ENCODE measurements at regions of chr4 and their contacts with region 1.

Region 1: DNA sequence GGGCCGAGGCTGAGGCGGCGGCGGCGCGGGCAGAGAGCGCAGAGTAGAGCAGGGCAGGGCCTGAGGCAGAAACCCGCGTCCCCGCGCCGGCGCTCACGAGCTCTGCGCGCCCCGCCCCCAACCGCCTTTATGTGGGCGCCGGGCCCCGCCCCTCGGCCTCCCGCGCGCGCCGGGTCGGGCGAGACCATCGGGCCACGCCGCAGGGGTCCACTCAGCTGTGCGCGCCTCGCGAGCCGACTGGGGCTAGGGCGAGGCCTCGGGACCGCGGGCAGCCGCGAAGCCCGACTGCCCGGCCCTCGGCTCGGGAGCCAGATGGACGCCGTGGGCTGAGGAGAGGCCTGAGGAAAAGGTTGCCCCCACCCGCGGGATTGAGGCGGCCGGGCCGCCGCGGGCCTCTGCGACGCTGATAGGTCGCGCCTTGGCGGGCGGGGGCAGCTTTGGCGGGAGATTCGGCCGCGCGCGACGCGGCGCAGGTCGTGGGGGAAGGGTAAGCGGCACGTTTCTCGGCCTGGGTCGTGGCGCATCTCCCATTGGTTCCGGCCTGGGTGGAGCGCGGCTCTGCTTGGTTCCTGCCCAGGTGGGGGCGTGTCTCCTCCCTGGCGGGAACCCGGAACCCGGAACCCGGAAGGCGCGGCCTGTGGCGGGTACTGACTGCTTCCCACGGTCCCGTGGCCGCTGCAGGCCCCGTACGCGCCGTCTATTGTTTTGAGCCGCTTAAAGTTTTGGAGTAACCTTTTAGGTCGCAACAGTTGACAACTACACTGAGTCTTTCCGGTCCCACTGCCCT is at the start of gene SLBP:
- DNase-seq: peak; percentile 100
- H3K4me3 Mint-ChIP-seq: peak within 1 kb of the TSS; percentile 95
- H3K27ac Mint-ChIP-seq: peak within 1 kb of the TSS; percentile 98
- H3K4me1 Mint-ChIP-seq: peaks cover 49% of the 10 kb centered on the region
- H3K27me3 Mint-ChIP-seq: no peaks in the 10 kb centered on the region
- total RNA-seq, gene SLBP: 150 and 156 TPM in 2 replicates

Region 2: GRCh38 chr4:1683736-1684505 is 28.5 kb before region 1 on chr4 and contains the start of gene FAM53A:
- intact Hi-C with region 1: loop called (anchors 1 kb)
- DNase-seq: no peak
- H3K4me3 Mint-ChIP-seq: peak within 1 kb of the TSS; percentile 83
- H3K27ac Mint-ChIP-seq: peak within 1 kb of the TSS; percentile 88
- H3K4me1 Mint-ChIP-seq: peaks cover 12% of the 10 kb centered on the region
- H3K27me3 Mint-ChIP-seq: peaks cover 2% of the 10 kb centered on the region
- total RNA-seq, gene FAM53A: 3.5 and 4.0 TPM in 2 replicates

Region 3: DNA sequence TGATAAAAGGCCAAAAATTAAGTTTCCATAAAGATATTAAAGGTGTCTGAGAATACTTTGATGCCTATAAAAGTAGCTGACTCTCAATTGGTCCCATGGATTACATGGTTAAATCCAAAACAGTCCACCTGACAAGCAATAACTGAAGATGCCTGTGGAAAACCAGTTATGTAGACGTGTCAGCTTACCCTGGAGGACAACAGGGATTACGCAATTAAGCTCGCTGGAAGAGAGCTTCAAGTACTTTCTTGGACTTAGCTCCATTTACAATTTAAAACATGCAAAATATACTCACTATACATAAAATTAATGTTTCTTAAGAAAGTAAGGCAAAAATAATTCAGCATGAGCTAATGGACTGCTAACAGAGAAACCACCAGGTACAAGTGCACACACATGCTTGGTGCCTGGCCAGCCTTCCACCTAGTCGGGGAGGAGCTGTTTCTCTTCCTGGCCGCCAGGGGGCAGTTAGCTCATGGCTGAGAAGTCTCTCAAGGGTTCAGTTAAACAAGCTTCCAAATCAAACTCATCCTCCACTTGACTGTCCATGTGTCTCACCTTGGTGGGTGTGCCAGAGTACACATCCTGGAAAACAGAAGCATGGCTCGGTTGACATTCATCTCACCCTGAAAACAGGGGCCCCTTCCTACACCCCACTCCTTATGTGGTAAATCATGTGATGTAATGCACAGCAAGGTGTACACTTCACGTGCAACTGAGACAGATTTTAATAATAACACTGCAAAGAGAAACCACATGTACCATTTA is 19.1 kb before region 1 on chr4:
- intact Hi-C with region 1: loop called (anchors 1 kb)
- DNase-seq: peak; percentile 93
- H3K4me3 Mint-ChIP-seq: no peak overlapping the region
- H3K27ac Mint-ChIP-seq: peak overlapping the region; percentile 39
- H3K4me1 Mint-ChIP-seq: peaks cover 7% of the 10 kb centered on the region
- H3K27me3 Mint-ChIP-seq: no peaks in the 10 kb centered on the region

Region 4: GRCh38 chr4:2105559-2105958 is 393.1 kb after region 1 on chr4:
- intact Hi-C with region 1: no loop called
- DNase-seq: peak; percentile 27
- H3K4me3 Mint-ChIP-seq: no peak overlapping the region
- H3K27ac Mint-ChIP-seq: no peak overlapping the region
- H3K4me1 Mint-ChIP-seq: peaks cover 6% of the 10 kb centered on the region
- H3K27me3 Mint-ChIP-seq: peaks cover 15% of the 10 kb centered on the region

Measured in activated CD4-positive, alpha-beta T cell treated with anti-CD3 and anti-CD28 coated beads, Interleukin-2, amount 10 ng/mL, durations not matched to agents 24 days and 14 days (primary cell).